Mammary epithelial cell (primary cell): ENCODE measurements at regions of chr3 and their contacts with region 1.

Region 1: DNA sequence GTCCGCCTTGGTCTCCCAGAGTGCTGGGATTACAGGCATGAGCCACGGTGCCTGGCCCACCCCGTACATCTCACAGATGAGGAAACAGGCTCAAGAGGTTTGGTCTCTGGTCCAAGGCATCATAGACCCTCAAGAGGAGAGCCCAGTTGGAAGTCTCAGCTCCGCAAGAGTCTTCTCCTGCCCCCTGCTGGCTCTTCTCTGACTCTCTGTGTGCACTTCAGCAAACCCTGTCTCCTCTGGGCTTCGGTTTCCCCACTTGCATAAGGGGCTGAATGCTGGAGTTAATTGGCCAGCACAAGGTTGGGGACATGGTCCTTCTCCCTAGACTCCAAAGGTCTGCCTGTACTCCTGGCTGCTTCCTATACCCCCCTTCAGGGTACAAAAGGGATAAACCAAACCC is 3.9 kb downstream of the MST1R start:
- DNase-seq: no peak
- H3K4me3 ChIP-seq: peak overlapping the region in 1 of 3 experiments; percentile 14
- H3K27ac ChIP-seq: peak overlapping the region; percentile 84
- H3K4me1 ChIP-seq: peaks cover 62% of the 10 kb centered on the region
- H3K27me3 ChIP-seq: no peaks in the 10 kb centered on the region
- CTCF ChIP-seq: peak in 1 of 2 donors; percentile 24

Region 2: DNA sequence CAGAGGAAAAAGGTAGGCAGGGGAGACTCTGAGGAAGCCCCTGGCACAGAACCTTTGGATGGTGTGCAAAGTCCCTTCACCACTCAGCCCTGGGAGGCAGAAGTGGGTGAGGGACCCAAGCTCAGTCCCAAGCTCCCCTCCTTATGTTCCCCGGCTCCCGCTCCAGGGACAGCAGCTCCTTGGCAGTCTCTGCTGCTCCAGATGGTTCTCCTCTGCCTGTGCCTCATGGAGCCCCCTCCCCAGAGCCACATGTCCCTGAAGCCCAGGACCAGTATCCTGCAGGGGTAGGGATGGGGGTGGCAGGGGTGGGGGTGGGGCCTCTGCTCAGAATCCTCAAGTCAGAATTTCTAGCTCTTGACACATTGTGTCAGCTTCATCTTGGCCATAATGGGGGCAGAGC is 22.1 kb before region 1 on chr3:
- CTCF ChIA-PET with region 1: no interaction called
- dilution Hi-C with region 1: no loop called
- in situ Hi-C with region 1: no loop called
- intact Hi-C with region 1: loop called (anchors 2 kb)
- DNase-seq: no peak
- H3K4me3 ChIP-seq: no peak overlapping the region
- H3K27ac ChIP-seq: no peak overlapping the region
- H3K4me1 ChIP-seq: no peaks in the 10 kb centered on the region
- H3K27me3 ChIP-seq: no peaks in the 10 kb centered on the region
- CTCF ChIP-seq: no peak

Region 3: GRCh38 chr3:49929331-49930240 is 29.8 kb after region 1 on chr3 and contains the start of gene MON1A:
- CTCF ChIA-PET with region 1: no interaction called
- dilution Hi-C with region 1: no loop called
- in situ Hi-C with region 1: no loop called
- intact Hi-C with region 1: loop called (anchors 2 kb)
- DNase-seq: peak; percentile 89
- H3K4me3 ChIP-seq: peak within 1 kb of the TSS; percentile 65 to 72 (median 66)
- H3K27ac ChIP-seq: no peak within 1 kb of the TSS
- H3K4me1 ChIP-seq: peaks cover 25% of the 10 kb centered on the region
- H3K27me3 ChIP-seq: no peaks in the 10 kb centered on the region
- CTCF ChIP-seq: peak in 1 of 2 donors; percentile 47
- total RNA-seq, gene MON1A: 11.5 to 15.9 TPM

Region 4: DNA sequence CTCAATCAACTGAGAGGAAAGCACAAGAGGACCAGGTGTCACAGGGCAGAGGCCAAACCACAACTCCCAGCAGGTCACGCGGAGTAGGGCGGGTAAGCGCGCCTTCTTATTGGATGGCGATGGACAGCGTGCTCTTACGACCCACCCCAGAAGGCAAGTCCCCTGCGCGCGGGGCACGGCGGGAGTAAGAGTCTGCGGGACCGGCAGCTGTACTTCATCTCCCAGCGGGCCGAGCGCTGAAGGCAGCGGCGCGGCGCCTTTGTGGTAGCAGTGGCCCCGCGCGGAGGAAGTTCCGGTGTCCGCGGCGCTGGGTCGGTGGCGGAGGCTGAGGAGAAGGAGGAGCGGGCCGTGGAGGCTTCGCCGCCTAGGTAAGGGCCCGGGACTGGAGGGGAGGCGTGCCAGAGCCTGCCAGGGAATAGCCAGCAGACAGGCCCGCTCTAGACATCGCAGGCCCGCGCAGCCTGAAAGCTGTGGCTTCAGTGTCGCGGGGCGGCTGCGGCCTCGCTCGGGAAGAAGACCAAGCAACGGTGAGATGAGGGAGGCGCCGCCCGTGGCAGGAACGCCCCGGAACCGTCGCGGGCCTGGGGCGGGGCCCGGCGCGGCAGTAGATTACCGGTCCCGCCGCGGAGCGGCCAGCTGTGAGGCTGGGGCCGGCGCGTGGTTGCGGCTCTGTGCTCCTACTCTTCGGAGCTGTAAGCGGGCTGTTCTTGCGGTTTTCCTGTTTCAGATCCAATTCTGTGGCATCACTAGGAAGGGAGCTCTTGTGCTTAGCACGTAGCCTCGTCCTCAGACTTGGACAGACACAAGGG is 40.2 kb after region 1 on chr3 and contains the start of gene RBM6:
- CTCF ChIA-PET with region 1: no interaction called
- dilution Hi-C with region 1: no loop called
- in situ Hi-C with region 1: no loop called
- intact Hi-C with region 1: loop called (anchors 2 kb)
- DNase-seq: peak; percentile 97
- H3K4me3 ChIP-seq: peak within 1 kb of the TSS; percentile 95 to 100 (median 99)
- H3K27ac ChIP-seq: peak within 1 kb of the TSS; percentile 81
- H3K4me1 ChIP-seq: peaks cover 8% of the 10 kb centered on the region
- H3K27me3 ChIP-seq: no peaks in the 10 kb centered on the region
- CTCF ChIP-seq: no peak
- total RNA-seq, gene RBM6: 39.8 to 60.9 TPM

Region 5: GRCh38 chr3:50347194-50347918 is 447.5 kb after region 1 on chr3:
- CTCF ChIA-PET with region 1: no interaction called
- dilution Hi-C with region 1: no loop called
- in situ Hi-C with region 1: no loop called
- intact Hi-C with region 1: no loop called
- DNase-seq: peak; percentile 62
- H3K4me3 ChIP-seq: no peak overlapping the region
- H3K27ac ChIP-seq: no peak overlapping the region
- H3K4me1 ChIP-seq: peaks cover 26% of the 10 kb centered on the region
- H3K27me3 ChIP-seq: no peaks in the 10 kb centered on the region
- CTCF ChIP-seq: peak; percentile 52 to 60